ENCODE measurements at regions of chr6 and their contacts with region 1.

Region 1: GRCh38 chr6:42771741-42772100 is 10.1 kb upstream of the BICRAL start:
- DNase-seq: no peak
- H3K4me3 Mint-ChIP-seq: peak overlapping the region; percentile 74
- H3K27ac Mint-ChIP-seq: peak overlapping the region; percentile 100
- H3K4me1 Mint-ChIP-seq: peaks cover 52% of the 10 kb centered on the region
- H3K27me3 Mint-ChIP-seq: no peaks in the 10 kb centered on the region

Region 2: DNA sequence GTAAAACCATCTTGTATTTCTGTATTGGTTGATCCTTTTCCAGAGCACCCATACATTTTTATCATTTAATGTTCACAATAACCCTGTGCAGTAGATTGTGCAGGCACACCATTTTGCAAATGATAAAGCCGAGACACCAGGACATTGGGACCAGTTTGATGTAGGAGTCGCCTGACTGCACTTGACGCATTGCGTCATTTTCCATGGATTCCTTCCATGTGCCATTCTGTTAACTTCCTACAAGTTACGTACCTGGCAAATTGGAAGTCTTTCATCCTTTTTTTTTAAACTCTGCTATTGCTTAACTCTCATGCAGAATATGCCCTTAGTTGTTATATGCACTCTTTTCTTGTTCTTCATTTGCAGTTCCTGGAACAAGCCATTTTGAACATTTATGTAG is 92.4 kb before region 1 on chr6:
- intact Hi-C with region 1: no loop called
- DNase-seq: no peak
- H3K4me3 Mint-ChIP-seq: no peak overlapping the region
- H3K27ac Mint-ChIP-seq: no peak overlapping the region
- H3K4me1 Mint-ChIP-seq: no peaks in the 10 kb centered on the region
- H3K27me3 Mint-ChIP-seq: no peaks in the 10 kb centered on the region

Region 3: GRCh38 chr6:42782622-42783176 is 11.0 kb after region 1 on chr6:
- intact Hi-C with region 1: loop called (anchors 1 kb)
- DNase-seq: peak; percentile 61
- H3K4me3 Mint-ChIP-seq: peak overlapping the region; percentile 87
- H3K27ac Mint-ChIP-seq: peak overlapping the region; percentile 99
- H3K4me1 Mint-ChIP-seq: peaks cover 33% of the 10 kb centered on the region
- H3K27me3 Mint-ChIP-seq: no peaks in the 10 kb centered on the region